Activated CD4-positive, alpha-beta T cell treated with anti-CD3 and anti-CD28 coated beads for 36 hours (primary cell): ENCODE measurements at regions of chr2 and their contacts with region 1.

Region 1: DNA sequence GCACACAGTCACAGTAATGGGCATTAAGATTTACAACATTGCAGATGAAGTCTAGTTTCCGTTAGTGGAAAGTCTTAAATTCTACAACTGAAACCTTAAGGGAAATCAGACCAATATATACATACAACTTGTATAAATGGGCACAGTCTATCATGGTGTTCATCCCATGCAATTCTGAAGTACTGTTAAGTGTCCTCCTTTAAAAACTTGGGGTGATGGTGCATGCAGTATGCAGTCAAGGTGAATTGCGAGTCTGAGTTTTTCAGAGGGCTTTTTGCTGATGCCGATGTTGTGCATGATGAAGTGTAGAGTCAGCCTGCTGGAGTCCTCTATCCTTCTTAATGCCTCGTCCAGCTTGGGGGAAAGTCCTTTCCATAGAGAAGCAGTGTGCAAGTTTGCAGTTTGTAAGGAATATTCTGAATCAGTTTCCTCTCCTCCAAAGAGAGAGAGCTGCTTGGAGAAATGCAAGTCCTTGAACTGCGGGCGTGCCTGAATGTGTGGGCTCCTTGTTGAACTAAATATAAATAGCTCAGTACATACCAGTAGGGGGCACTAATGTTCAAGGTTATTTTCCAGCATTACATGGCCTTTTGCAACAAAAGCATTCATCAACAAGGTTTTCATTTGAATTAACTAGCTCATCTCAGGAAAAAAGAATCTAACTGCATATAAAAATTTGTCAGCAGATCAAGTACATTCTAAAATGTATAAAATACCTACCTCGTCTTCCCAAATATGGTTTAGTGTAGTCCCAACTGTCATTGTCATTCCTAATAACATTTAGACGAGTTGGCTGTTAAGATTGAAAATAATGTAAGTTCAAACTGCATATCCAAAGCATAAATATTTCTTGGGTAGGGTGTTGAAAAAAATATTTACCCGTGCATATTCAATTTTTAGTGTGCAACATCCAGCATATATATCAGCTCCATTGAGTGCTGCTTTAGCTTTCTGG is 21.3 kb downstream of the HNRNPLL start:
- DNase-seq: peak; percentile 60
- ATAC-seq: peak; percentile 87
- H3K4me3 Mint-ChIP-seq: no peak overlapping the region
- H3K27ac Mint-ChIP-seq: no peak overlapping the region
- H3K4me1 Mint-ChIP-seq: peaks cover 32% of the 10 kb centered on the region
- H3K27me3 Mint-ChIP-seq: no peaks in the 10 kb centered on the region

Region 2: GRCh38 chr2:38315707-38316333 is 265.6 kb before region 1 on chr2:
- CTCF ChIA-PET with region 1: interaction called, 3 read pairs
- POLR2A ChIA-PET with region 1: no interaction called
- intact Hi-C with region 1: loop called in 1 of 2 experiments (anchors 5 kb)
- DNase-seq: peak; percentile 26
- ATAC-seq: peak; percentile 100
- H3K4me3 Mint-ChIP-seq: no peak overlapping the region
- H3K27ac Mint-ChIP-seq: no peak overlapping the region
- H3K4me1 Mint-ChIP-seq: peaks cover 16% of the 10 kb centered on the region
- H3K27me3 Mint-ChIP-seq: no peaks in the 10 kb centered on the region

Region 3: GRCh38 chr2:38421274-38422056 is 160.0 kb before region 1 on chr2:
- CTCF ChIA-PET with region 1: no interaction called
- POLR2A ChIA-PET with region 1: no interaction called
- intact Hi-C with region 1: no loop called
- DNase-seq: no peak
- ATAC-seq: no peak
- H3K4me3 Mint-ChIP-seq: no peak overlapping the region
- H3K27ac Mint-ChIP-seq: no peak overlapping the region
- H3K4me1 Mint-ChIP-seq: no peaks in the 10 kb centered on the region
- H3K27me3 Mint-ChIP-seq: no peaks in the 10 kb centered on the region

Region 4: DNA sequence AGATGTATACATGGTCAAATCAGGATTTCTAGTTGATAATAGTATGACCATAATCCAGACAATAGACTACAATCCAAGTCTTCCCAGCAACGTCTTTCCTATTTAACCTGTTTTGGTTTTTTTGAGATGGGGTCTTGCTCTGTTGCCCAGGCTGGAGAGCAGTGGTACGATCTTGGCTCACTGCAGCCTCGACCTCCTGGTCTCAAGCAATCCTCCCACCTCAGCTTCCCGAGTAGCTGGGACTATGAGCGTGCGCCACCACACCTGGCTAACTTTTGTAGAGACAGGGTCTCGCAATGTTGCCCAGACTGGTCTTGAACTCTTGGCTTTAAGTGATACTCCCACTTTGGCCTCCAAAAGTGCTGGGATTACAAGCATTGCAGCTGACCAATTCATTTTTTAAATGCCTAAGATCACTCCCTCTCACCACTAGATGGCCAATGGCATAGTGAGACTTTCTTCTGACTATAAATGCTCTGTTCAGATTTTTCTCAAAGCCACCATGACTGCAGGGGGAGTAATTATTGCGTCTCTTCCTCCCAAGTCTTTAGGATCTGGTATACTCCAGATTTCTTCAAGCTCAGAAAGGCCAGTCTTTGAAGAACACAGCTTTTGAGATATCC is 26.4 kb before region 1 on chr2:
- CTCF ChIA-PET with region 1: interaction called, 27 read pairs
- POLR2A ChIA-PET with region 1: no interaction called
- intact Hi-C with region 1: no loop called
- DNase-seq: no peak
- ATAC-seq: no peak
- H3K4me3 Mint-ChIP-seq: no peak overlapping the region
- H3K27ac Mint-ChIP-seq: no peak overlapping the region
- H3K4me1 Mint-ChIP-seq: peaks cover 13% of the 10 kb centered on the region
- H3K27me3 Mint-ChIP-seq: no peaks in the 10 kb centered on the region

Region 5: GRCh38 chr2:38602732-38603401 is 21.4 kb after region 1 on chr2 and contains the start of gene HNRNPLL:
- CTCF ChIA-PET with region 1: interaction called, 215 read pairs
- POLR2A ChIA-PET with region 1: no interaction called
- intact Hi-C with region 1: no loop called
- DNase-seq: peak; percentile 99
- ATAC-seq: peak; percentile 87
- H3K4me3 Mint-ChIP-seq: peak within 1 kb of the TSS; percentile 76
- H3K27ac Mint-ChIP-seq: peak within 1 kb of the TSS; percentile 94
- H3K4me1 Mint-ChIP-seq: peaks cover 48% of the 10 kb centered on the region
- H3K27me3 Mint-ChIP-seq: no peaks in the 10 kb centered on the region
- total RNA-seq, gene HNRNPLL: 53.5 to 59.8 TPM

Region 6: DNA sequence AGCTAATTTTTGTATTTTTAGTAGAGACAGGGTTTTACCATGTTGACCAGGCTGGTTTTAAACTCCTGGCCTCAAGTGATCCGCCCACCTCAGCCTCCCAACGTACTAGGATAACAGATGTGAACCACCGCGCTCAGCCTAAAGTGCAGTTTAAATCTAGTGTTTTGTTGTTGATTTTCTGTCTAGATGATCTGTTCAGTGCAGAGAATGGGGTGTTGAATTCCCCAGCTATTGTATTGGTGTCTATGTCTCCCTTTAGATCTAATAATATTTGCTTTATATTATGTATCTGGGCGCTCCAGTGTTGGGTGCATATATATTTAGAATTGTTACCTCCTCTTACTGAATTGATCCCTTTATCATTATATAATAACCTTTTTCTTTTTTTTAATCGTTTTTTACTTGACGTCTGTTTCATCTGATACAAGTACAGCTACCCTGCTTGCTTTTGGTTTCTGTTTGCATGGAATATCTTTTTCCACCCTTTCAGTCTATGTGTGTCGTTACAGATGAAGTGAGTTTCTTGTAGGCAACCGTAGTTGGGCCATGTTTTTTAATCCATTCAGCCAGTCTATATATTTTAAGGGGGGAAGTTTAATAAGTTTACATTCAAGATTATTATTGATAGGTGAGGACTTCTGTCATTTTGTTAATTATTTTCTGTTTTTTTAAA is 118.8 kb after region 1 on chr2:
- CTCF ChIA-PET with region 1: interaction called, 13 read pairs
- POLR2A ChIA-PET with region 1: no interaction called
- intact Hi-C with region 1: no loop called
- DNase-seq: no peak
- ATAC-seq: peak; percentile 69
- H3K4me3 Mint-ChIP-seq: peak overlapping the region; percentile 61
- H3K27ac Mint-ChIP-seq: peak overlapping the region; percentile 93
- H3K4me1 Mint-ChIP-seq: peaks cover 69% of the 10 kb centered on the region
- H3K27me3 Mint-ChIP-seq: no peaks in the 10 kb centered on the region

Region 7: DNA sequence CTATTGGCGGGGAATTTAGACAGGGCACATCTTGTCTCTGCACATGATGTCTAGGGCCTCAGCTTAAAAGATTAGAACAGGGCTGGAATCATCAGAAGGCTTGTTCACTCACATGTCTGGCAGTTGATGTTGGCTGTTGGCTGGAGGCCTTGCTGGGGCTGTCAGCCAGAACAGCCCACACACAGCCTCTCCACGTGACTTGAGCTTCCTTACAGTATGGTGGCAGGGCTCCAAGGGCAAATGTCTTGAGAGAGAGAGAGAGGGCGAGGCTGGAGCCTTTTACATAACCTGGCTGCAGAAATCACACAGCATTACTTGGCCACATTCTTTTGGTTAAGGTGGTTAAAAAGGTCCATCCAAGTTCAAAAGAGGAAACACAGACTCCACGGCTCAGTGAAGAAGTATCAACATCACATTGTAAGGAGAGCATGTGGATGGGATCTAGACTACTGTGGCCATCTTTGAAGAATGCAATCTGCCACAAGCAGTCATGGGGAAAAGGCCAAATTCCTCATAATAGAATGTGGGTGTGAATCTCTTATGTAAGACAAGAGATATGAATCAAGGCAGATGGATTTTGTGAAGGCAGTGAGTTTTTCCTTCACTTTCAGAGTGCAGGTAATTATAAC is 139.3 kb after region 1 on chr2:
- CTCF ChIA-PET with region 1: interaction called, 290 read pairs
- POLR2A ChIA-PET with region 1: no interaction called
- intact Hi-C with region 1: no loop called
- DNase-seq: no peak
- ATAC-seq: no peak
- H3K4me3 Mint-ChIP-seq: peak overlapping the region; percentile 27
- H3K27ac Mint-ChIP-seq: peak overlapping the region; percentile 78
- H3K4me1 Mint-ChIP-seq: peaks cover 75% of the 10 kb centered on the region
- H3K27me3 Mint-ChIP-seq: no peaks in the 10 kb centered on the region

Region 8: GRCh38 chr2:38835015-38835601 is 253.6 kb after region 1 on chr2:
- CTCF ChIA-PET with region 1: interaction called, 4 read pairs
- POLR2A ChIA-PET with region 1: no interaction called
- intact Hi-C with region 1: loop called (anchors 5 kb)
- DNase-seq: no peak
- ATAC-seq: no peak
- H3K4me3 Mint-ChIP-seq: no peak overlapping the region
- H3K27ac Mint-ChIP-seq: no peak overlapping the region
- H3K4me1 Mint-ChIP-seq: no peaks in the 10 kb centered on the region
- H3K27me3 Mint-ChIP-seq: no peaks in the 10 kb centered on the region